K562 (cell line): ENCODE measurements at regions of chr20 and their contacts with region 1.

Region 1: GRCh38 chr20:36886859-36887751 is 11.2 kb downstream of the TLDC2 start:
- DNase-seq: peak; percentile 86 to 89 (median 88)
- ATAC-seq: peak; percentile 98
- H3K4me3 ChIP-seq: no peak overlapping the region
- H3K27ac ChIP-seq: no peak overlapping the region
- H3K4me1 ChIP-seq: peaks cover 0 to 13% of the 10 kb centered on the region in 2 experiments; a peak in 3 of 5 replicates
- H3K27me3 ChIP-seq: no peaks in the 10 kb centered on the region
- CTCF ChIP-seq: peak; percentile 92 to 99 (median 97)
- EP300 ChIP-seq: no peak
- POLR2A ChIP-seq: no peak
- RAD21 ChIP-seq: peak; percentile 94 to 96

Region 2: DNA sequence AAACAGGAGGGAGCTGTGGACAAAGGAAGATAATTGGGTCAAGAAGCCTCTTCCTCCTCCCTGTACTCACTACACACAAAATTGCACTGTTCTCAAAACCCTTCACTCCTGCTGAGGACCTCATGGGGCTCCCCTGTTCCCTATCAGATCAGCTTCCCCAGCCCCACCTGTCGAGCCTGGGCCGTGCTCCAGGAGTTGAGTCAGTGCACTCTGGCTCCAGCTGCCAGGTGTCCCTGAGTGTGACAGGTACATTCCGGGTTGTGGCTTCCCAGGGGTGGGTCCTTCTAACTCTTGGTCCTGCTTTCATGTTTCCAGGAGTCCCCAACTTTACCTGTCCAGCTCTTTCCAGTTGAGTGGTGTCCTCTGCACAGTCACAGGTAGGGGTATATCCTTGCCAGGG is 273.1 kb before region 1 on chr20:
- CTCF ChIA-PET with region 1: interaction called, 4 read pairs
- POLR2A ChIA-PET with region 1: interaction called, 3 read pairs
- in situ Hi-C with region 1: no loop called
- intact Hi-C with region 1: loop called (anchors 5 kb)
- DNase-seq: no peak
- ATAC-seq: no peak
- H3K4me3 ChIP-seq: no peak overlapping the region
- H3K27ac ChIP-seq: no peak overlapping the region
- H3K4me1 ChIP-seq: no peaks in the 10 kb centered on the region
- H3K27me3 ChIP-seq: no peaks in the 10 kb centered on the region
- CTCF ChIP-seq: no peak
- EP300 ChIP-seq: no peak
- POLR2A ChIP-seq: no peak
- RAD21 ChIP-seq: no peak

Region 3: DNA sequence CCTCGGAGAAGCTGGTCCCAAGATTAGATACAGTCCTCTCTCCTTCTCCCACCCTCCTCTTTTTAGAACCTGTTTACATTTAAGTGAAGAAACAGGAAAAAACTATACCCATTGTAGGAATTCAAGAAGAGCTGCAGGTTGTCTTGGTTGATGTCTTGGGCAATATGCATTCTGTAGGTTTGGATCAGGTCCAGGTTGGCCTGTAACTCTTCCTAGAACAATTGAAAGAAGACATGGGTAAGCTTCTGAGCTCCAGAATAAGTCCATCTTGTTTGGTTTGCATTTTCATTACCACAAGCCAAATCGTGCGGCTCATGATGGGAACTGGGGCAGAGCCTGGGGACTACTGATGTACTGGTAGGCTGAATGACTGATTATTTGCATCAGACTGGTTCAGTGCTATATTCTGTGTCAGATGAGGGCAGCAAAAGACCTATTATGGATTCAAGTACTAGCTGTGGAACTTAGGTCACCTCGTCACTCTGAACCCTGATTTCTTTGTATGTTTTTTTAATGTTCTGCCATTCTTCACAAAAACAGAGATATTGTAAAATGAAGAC is 220.8 kb before region 1 on chr20:
- CTCF ChIA-PET with region 1: interaction called, 4 read pairs
- POLR2A ChIA-PET with region 1: no interaction called
- in situ Hi-C with region 1: no loop called
- intact Hi-C with region 1: loop called (anchors 2 kb)
- DNase-seq: peak in 1 of 4 experiments; percentile 40
- ATAC-seq: peak; percentile 79
- H3K4me3 ChIP-seq: no peak overlapping the region
- H3K27ac ChIP-seq: no peak overlapping the region
- H3K4me1 ChIP-seq: no peaks in the 10 kb centered on the region
- H3K27me3 ChIP-seq: no peaks in the 10 kb centered on the region
- CTCF ChIP-seq: peak; percentile 15 to 61 (median 46); a peak in 3 of 6 replicates
- EP300 ChIP-seq: no peak
- POLR2A ChIP-seq: no peak
- RAD21 ChIP-seq: peak; percentile 42 to 71; a peak in 3 of 4 replicates

Region 4: DNA sequence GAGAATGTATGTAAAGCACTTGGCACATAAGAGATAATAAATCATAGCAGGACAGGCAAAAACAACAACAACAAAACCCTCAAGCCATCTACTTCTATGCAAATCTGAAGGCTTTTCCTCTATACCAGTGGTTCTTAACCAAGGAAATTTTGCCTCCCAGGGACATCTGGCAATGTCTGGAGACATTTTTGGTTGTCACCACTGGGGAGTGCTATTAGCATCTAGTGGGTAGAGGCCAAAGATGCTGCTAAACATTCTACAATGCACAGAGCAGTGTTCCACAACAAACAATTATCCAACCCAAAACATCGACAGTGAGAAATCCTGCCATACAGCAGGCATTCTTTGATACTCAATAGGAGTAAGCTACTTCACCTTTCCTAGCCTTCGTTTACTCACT is 169.4 kb before region 1 on chr20:
- CTCF ChIA-PET with region 1: no interaction called
- POLR2A ChIA-PET with region 1: no interaction called
- in situ Hi-C with region 1: no loop called
- intact Hi-C with region 1: loop called (anchors 2 kb)
- DNase-seq: peak in 1 of 4 experiments; percentile 43
- ATAC-seq: peak; percentile 77
- H3K4me3 ChIP-seq: no peak overlapping the region
- H3K27ac ChIP-seq: no peak overlapping the region
- H3K4me1 ChIP-seq: no peaks in the 10 kb centered on the region
- H3K27me3 ChIP-seq: no peaks in the 10 kb centered on the region
- CTCF ChIP-seq: peak; percentile 49 to 63 (median 59); a peak in 5 of 6 replicates
- EP300 ChIP-seq: no peak
- POLR2A ChIP-seq: no peak
- RAD21 ChIP-seq: peak; percentile 50 to 73

Region 5: DNA sequence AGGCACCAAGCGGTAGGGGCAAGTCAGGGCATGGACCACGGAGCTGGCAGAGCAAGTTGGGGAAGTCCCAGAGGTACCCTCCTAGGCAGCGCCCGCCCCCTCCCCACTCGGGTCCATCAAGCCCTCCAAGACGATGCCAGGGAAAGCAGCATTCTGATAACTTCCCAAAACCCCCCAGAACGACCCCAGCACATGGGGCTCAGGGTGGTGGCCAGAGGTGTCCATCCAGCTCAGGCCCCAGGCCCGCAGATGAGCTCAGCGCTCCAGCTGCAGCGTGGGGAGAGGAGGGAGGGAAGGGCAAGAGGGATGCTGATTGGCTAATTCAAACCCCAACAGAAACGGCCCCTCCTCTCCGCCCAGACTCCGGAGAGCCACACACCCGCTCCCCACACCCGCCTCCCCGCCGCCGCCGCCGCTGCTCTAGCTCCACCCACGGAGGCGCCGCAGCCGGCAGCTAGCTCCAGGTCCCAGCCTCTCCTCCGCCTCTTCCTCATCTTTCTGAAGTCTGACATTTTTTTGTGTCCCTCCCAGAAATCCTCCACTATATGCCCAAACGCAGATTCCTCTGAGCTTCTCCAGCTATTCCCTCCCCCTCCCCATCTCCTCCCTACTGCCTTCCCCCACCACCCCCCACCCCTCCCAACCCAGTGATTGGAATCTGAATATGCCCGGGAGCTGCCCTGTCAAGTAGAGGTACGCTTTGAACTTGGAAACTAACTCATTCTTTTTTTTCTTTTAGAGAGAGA is 51.5 kb before region 1 on chr20:
- CTCF ChIA-PET with region 1: no interaction called
- POLR2A ChIA-PET with region 1: no interaction called
- in situ Hi-C with region 1: no loop called
- intact Hi-C with region 1: loop called (anchors 2 kb)
- DNase-seq: peak; percentile 96 to 100 (median 100)
- ATAC-seq: peak; percentile 98
- H3K4me3 ChIP-seq: no peak overlapping the region; the same call in 1 of the 2 replicates
- H3K27ac ChIP-seq: peak overlapping the region; percentile 91
- H3K4me1 ChIP-seq: peaks cover 17 to 30% of the 10 kb centered on the region in 2 experiments
- H3K27me3 ChIP-seq: no peaks in the 10 kb centered on the region
- CTCF ChIP-seq: no peak
- EP300 ChIP-seq: peak; percentile 11; the same call in 1 of the 2 replicates
- POLR2A ChIP-seq: peak; percentile 80
- RAD21 ChIP-seq: no peak